Cardiac septum (tissue), 1 donor: ENCODE measurements at regions of chr4 and their contacts with region 1.

Region 1: DNA sequence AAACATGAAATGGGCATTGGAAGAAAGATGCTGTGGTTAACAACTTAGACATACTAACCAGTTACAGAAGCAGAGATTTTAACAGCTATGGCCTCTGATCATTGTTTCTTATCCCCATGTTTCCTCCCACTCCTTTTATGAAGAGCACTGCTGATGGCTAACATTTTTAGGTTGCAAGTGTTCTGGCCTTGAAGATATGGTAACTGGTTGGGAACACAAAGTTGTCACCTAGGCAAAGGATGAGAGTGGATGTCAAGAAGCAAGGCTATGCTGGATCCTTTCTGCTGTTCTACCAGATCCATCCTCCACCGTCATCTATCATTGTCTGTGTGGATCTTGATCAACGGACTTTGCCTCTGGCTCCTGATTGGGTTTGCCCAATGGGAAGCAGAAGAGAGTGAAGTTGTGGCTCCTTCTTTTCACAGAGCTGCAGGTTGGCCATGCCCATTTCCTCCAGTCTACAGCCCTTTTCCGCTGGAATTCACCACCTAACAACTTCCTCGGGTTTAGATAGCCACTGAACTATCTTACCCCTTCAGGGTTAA is 48.9 kb upstream of the SPP1 start:
- DNase-seq: no peak

Region 2: GRCh38 chr4:87339440-87339839 is 587.2 kb before region 1 on chr4:
- intact Hi-C with region 1: no loop called
- DNase-seq: no peak

Region 3: DNA sequence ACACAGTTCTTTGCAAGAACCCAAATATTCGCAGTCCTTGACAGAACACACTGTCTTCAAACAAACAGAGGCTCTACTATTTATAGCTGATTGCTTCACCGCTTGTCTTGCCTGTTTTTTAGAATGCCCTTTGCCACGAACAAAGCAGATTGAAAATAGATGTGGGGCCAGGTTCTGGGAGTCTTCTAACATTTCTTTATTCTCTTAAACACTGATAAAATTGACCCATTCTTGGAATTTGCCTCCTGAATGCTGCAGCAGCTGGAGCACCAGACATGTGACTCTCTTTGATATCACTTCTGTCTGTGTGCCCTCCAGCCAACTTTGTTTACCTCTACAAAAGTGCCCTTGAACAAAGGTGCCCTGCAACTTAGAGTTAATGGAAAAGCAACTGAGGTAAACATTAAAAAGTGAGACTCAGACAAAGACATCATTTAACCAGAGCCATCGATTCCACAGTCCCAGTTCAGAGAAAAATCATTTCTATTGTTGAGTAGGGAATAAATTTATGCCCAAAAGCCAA is 15.3 kb before region 1 on chr4:
- intact Hi-C with region 1: no loop called
- DNase-seq: no peak

Region 4: GRCh38 chr4:87937523-87937922 is 10.9 kb after region 1 on chr4:
- intact Hi-C with region 1: loop called (anchors 1 kb)
- DNase-seq: no peak

Region 5: GRCh38 chr4:88158489-88159243 is 232.0 kb after region 1 on chr4 and contains the start of gene ABCG2:
- intact Hi-C with region 1: no loop called
- DNase-seq: no peak
- total RNA-seq, gene ABCG2: 4.4 TPM

Region 6: GRCh38 chr4:88264336-88264735 is 337.7 kb after region 1 on chr4:
- intact Hi-C with region 1: no loop called
- DNase-seq: no peak